Transverse colon (tissue), 4 donors: ENCODE measurements at regions of chr18 and their contacts with region 1.

Region 1: DNA sequence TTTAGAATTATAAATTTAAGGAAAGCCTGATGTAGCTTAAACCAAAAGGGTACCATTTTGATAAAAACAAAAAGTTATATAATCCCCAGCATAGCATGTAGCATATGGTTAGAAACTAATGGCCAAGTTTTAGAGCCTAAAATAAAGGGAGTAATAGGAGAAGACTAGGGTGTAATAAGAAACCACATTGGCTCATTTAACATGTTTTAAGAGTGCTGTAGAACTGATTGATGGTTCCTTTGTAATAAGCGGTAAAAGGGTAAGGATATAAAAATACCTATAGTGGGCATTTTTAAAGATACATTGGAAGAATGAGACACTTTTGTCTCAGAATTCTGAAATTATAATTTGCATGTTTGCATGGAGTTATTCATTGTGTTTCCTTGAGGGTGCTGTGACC is 1.9 kb downstream of the PSMA8 start:
- DNase-seq: no peak
- H3K4me3 ChIP-seq: no peak overlapping the region
- H3K27ac ChIP-seq: no peak overlapping the region
- H3K4me1 ChIP-seq: no peaks in the 10 kb centered on the region
- H3K27me3 ChIP-seq: no peaks in the 10 kb centered on the region
- CTCF ChIP-seq: no peak
- EP300 ChIP-seq: no peak
- POLR2A ChIP-seq: no peak

Region 2: DNA sequence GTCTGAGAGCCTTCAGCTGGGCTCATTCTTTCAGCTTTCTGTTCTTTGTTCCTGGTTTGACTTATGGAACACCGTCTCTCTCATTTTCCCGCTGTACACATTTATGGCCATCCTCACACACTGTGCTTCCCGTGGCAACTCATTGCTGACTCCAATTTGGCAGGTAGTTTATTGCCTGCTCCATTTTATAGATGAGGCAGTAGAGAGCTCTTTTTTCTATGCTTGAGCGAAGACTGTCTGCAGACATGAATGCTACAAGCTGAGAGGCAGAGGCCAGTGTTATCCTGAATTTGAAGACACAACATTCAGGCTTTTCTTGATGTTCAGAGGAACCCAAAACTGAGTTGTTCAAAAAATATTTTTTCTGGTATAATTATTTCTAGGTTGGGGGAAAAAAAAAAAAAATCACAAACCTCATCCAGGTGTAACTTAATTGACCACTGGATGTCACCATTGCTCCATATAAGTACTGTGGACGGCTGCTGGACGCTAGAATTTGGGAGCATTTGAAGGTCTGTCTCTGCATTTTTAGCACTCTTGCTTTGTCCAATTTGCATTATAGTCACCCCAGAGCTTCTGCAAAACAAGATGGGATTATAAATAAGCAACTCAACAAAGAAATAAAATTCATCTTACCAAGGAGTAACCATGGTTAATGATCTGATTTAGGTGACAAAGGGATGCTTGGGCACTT is 1591.6 kb before region 1 on chr18:
- in situ Hi-C with region 1: no loop called
- intact Hi-C with region 1: loop called (anchors 5 kb)
- DNase-seq: no peak
- H3K4me3 ChIP-seq: no peak overlapping the region
- H3K27ac ChIP-seq: no peak overlapping the region
- H3K4me1 ChIP-seq: no peaks in the 10 kb centered on the region
- H3K27me3 ChIP-seq: no peaks in the 10 kb centered on the region
- CTCF ChIP-seq: peak; percentile 29 to 41 (median 35)
- EP300 ChIP-seq: no peak
- POLR2A ChIP-seq: no peak

Region 3: DNA sequence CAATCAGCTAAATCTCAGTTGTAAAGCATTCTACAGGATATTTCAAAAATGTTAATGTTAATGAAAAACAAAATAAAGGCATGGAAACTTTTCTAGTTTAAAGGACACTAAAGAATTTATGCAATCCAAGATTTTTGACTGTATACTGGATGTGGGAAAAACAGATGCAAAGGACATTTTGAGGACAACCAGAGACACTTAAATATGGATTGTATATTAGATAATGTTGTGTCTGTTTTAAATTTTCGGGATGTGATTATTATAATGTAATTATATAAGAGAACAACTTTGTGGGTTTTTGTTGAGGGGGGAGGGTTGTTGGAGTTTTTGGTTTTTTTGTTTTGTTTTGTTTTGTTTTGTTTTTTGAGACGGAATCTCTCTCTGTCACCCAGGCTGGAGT is 29.0 kb after region 1 on chr18:
- in situ Hi-C with region 1: no loop called
- intact Hi-C with region 1: no loop called
- DNase-seq: no peak
- H3K4me3 ChIP-seq: no peak overlapping the region
- H3K27ac ChIP-seq: no peak overlapping the region
- H3K4me1 ChIP-seq: no peaks in the 10 kb centered on the region
- H3K27me3 ChIP-seq: no peaks in the 10 kb centered on the region
- CTCF ChIP-seq: no peak
- EP300 ChIP-seq: no peak
- POLR2A ChIP-seq: no peak